ENCODE measurements at regions of chr1 and their contacts with region 1.

Region 1: DNA sequence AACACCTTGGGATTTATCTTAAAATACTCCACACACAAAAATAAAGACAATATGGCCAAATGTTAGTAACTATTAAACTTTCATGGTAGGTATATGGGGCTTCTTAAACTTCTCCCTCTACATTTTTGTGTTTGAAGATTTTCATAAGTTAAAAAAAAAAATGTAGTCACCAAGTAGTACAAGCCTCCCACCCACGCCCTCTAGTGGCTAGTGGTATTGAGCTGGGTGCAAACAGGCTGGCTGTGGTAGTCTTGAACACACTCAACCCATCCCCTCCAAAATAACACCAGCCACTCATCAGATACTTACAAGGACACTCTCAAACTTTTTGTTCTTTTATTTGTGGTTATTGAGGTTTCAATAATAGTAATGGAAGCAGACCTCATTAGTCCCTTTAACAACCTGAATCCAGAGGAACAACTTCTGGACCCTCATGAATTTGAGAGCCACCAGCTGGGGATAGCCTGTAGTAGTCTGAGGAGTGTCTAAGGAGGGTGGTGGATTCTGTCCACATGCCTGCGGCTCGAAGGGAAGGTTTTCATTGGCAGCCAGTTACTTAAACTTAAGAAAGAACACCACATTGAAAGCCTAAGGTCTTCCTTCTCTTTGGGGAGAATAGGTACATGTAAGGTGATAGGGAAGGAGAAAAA is 15.6 kb downstream of the RD3 start:
- DNase-seq: peak; percentile 63
- ATAC-seq: peak; percentile 93
- H3K4me3 ChIP-seq: no peak overlapping the region
- H3K27ac ChIP-seq: no peak overlapping the region
- H3K4me1 ChIP-seq: no peaks in the 10 kb centered on the region
- H3K27me3 ChIP-seq: peaks cover 36% of the 10 kb centered on the region
- CTCF ChIP-seq: peak; percentile 80
- POLR2A ChIP-seq: no peak
- RAD21 ChIP-seq: peak; percentile 60

Region 2: GRCh38 chr1:211420389-211420788 is 55.9 kb before region 1 on chr1:
- CTCF ChIA-PET with region 1: interaction called, 4 read pairs
- POLR2A ChIA-PET with region 1: no interaction called
- dilution Hi-C with region 1: no loop called
- in situ Hi-C with region 1: no loop called
- intact Hi-C with region 1: loop called (anchors 10 kb)
- DNase-seq: peak; percentile 54
- ATAC-seq: no peak
- H3K4me3 ChIP-seq: no peak overlapping the region
- H3K27ac ChIP-seq: no peak overlapping the region
- H3K4me1 ChIP-seq: peaks cover 2% of the 10 kb centered on the region
- H3K27me3 ChIP-seq: no peaks in the 10 kb centered on the region
- CTCF ChIP-seq: no peak
- POLR2A ChIP-seq: no peak
- RAD21 ChIP-seq: no peak

Region 3: DNA sequence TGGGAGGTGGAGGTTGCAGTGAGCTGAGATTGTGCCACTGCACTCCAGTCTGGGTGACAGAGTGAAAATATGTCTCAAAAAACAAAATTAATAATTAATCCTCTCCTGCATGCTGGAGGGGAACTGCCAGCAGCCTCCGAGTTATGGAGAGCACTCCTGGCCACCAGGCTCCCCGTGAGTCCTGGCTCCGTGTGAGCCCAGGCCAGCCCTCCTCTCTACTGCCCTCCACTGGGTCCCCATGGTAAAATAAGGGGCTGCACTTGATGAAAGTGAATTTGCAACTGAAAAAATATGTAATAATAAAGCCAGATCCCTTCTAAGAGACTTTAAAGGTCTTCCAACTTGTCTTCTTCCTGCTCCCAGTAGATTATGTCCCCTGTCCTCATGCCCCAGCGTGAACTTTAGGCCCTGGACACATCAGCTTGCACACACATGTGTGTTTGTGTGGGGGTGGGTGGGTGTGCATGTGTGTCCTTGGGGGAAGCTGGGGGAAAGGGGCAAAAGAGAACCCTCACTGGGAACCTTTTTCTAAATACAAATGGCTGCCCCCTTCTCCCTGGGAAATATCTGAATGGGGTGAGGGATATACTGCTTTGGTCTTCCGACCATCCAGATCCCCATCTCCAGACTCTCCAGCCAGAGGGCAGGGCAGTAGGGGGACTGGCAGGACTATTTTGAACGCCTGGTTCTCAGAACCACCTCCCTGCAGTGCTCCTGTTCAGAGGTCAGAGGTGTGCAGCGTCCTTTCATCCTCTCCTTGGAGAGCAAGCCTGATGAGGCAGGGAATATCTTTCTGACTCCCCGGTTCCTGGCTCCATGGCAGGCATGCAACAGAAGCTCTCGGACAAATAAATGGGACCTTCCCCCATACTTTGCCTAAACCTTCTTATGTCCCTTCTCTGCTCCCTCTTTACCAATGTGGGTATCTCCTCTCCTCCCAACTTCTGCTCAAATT is 172.9 kb after region 1 on chr1:
- CTCF ChIA-PET with region 1: no interaction called
- POLR2A ChIA-PET with region 1: no interaction called
- dilution Hi-C with region 1: no loop called
- in situ Hi-C with region 1: no loop called
- intact Hi-C with region 1: no loop called
- DNase-seq: peak; percentile 35
- ATAC-seq: peak; percentile 77; the same call in 1 of the 2 replicates
- H3K4me3 ChIP-seq: no peak overlapping the region
- H3K27ac ChIP-seq: no peak overlapping the region
- H3K4me1 ChIP-seq: peaks cover 6% of the 10 kb centered on the region
- H3K27me3 ChIP-seq: no peaks in the 10 kb centered on the region
- CTCF ChIP-seq: peak; percentile 54
- POLR2A ChIP-seq: no peak
- RAD21 ChIP-seq: peak; percentile 59